Psoas muscle (tissue), 8 donors: ENCODE measurements at regions of chr16 and their contacts with region 1.

Region 1: DNA sequence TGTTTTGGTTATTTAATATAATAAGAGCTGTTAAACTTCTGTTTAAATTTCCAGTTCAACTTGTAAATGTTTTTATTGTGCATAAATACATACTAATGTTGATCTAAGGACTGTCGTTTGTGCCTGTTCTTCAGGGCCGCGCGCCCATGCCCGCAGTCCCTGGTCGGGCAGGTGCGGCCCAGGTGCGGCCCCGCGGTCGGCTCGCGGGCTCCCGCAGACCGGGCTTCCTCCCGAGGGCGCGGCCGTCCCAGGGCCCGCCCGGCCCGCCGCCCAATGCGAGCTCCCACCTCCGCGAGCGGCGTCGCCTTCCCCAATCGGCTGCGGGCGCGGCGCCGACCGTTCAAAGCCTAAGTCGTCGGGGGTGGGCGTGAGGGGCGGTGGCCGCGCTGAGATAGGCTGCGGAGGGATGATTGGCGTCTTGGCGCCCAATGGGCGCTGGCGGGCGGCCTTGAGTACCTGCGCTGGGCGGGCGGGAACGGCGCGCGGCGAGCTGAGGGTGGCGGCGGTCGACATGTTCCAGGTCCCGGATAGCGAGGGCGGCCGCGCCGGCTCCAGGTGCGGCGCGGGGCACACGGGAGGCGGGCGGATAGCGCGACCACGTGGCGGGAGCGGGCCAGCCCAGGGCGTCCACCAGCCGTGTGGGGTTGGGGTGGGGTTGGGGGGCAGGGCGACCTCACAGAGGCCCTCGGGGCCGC is at the start of gene JPT2:
- DNase-seq: peak; percentile 97 to 98
- ATAC-seq: peak; percentile 97 to 99 (median 98)
- H3K4me3 ChIP-seq: peak within 1 kb of the TSS; percentile 81
- H3K27ac ChIP-seq: peak within 1 kb of the TSS; percentile 71
- H3K4me1 ChIP-seq: peaks cover 6% of the 10 kb centered on the region
- H3K27me3 ChIP-seq: no peaks in the 10 kb centered on the region
- CTCF ChIP-seq: no peak
- total RNA-seq, gene JPT2: 21.4 to 30.6 (median 25.1) TPM

Region 2: DNA sequence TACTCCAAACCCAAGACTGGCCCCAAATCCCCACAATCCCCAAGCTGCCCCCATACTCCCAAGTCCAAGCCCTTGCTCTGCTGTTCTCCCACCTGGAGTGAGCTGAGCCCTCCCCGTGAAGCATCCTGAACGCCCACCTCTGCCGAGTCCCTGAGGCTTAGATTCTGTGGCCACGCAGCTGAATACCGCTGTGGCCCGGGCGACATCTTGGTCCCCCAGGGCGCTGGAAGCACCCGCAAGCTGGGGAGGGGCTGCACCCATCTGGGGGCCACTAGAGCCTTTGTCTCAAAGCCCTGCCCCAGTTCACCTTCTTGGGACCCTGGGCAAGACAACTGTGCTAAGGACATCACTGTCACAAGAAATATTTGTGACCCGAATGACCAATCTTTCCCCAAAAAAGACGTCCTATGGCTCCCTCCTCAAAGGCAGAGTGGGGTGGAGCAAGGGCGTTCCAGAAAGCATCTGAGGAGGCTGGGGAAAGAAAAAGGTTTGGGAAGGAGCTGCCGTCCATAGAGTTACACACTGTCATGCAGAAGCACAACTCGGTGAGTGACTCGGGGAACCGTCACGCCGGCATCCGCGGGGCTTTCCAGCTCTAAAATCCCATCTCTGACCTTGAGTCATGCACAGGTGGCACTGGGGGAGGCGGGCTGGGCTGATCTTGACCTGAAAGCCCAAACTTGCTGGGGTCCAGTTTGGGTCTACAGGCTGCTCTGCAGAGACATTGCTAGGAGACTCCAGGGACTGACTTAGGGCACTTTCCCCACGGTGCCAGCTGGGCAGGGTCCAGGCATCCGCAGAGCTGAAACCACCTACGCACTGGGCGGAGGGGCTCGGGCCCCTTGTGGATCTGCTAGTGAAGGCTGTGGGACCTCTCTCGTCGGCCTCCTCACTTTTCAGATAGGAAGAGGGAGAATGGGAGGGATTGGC is 195.8 kb before region 1 on chr16:
- intact Hi-C with region 1: loop called in 1 of 2 experiments (anchors 5 kb)
- DNase-seq: no peak
- ATAC-seq: no peak
- H3K4me3 ChIP-seq: no peak overlapping the region
- H3K27ac ChIP-seq: no peak overlapping the region
- H3K4me1 ChIP-seq: no peaks in the 10 kb centered on the region
- H3K27me3 ChIP-seq: no peaks in the 10 kb centered on the region
- CTCF ChIP-seq: no peak

Region 3: GRCh38 chr16:1645914-1646525 is 31.9 kb before region 1 on chr16:
- intact Hi-C with region 1: no loop called
- DNase-seq: no peak
- ATAC-seq: no peak
- H3K4me3 ChIP-seq: no peak overlapping the region
- H3K27ac ChIP-seq: no peak overlapping the region
- H3K4me1 ChIP-seq: peaks cover 34% of the 10 kb centered on the region
- H3K27me3 ChIP-seq: no peaks in the 10 kb centered on the region
- CTCF ChIP-seq: no peak

Region 4: DNA sequence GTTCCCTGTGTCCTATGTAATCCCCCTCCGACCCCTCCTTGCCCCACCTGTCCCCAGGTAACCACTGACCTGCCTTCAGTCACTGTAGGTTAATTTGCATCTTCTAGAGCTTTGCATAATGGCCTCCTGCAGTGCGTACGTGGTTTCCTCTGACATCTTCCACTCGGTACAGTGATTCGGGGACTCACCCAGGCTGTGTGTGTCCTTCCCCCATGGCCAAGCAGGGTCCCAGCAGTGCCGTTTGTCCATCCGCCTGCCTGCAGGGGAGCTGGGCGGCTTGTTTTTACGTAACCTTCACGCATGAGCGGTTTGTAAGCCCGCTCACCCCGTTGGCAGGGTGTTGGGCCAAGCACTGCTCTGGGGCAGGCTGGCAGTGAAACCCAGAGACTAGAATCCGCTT is 36.0 kb after region 1 on chr16:
- intact Hi-C with region 1: no loop called
- DNase-seq: peak in 1 of 2 donors; percentile 48
- ATAC-seq: no peak
- H3K4me3 ChIP-seq: no peak overlapping the region
- H3K27ac ChIP-seq: no peak overlapping the region
- H3K4me1 ChIP-seq: peaks cover 14% of the 10 kb centered on the region
- H3K27me3 ChIP-seq: no peaks in the 10 kb centered on the region
- CTCF ChIP-seq: no peak